ENCODE measurements at regions of chr16 and their contacts with region 1.

Region 1: GRCh38 chr16:21277927-21278706 is at the start of gene CRYM:
- DNase-seq: peak; percentile 84
- H3K4me3 Mint-ChIP-seq: peak within 1 kb of the TSS; percentile 63
- H3K27ac Mint-ChIP-seq: no peak within 1 kb of the TSS
- H3K4me1 Mint-ChIP-seq: peaks cover 2% of the 10 kb centered on the region
- H3K27me3 Mint-ChIP-seq: peaks cover 63% of the 10 kb centered on the region
- total RNA-seq, gene CRYM: not detected in 2 replicates

Region 2: GRCh38 chr16:21158208-21159110 is 119.7 kb before region 1 on chr16 and contains the start of gene LDAF1:
- intact Hi-C with region 1: loop called (anchors 10 kb)
- DNase-seq: peak; percentile 96
- H3K4me3 Mint-ChIP-seq: peak within 1 kb of the TSS; percentile 91
- H3K27ac Mint-ChIP-seq: peak within 1 kb of the TSS; percentile 61
- H3K4me1 Mint-ChIP-seq: peaks cover 14% of the 10 kb centered on the region
- H3K27me3 Mint-ChIP-seq: no peaks in the 10 kb centered on the region
- total RNA-seq, gene LDAF1: 7.2 and 7.3 TPM in 2 replicates

Region 3: GRCh38 chr16:21184834-21185233 is 93.3 kb before region 1 on chr16:
- intact Hi-C with region 1: loop called (anchors 1 kb)
- DNase-seq: no peak
- H3K4me3 Mint-ChIP-seq: no peak overlapping the region
- H3K27ac Mint-ChIP-seq: no peak overlapping the region
- H3K4me1 Mint-ChIP-seq: peaks cover 15% of the 10 kb centered on the region
- H3K27me3 Mint-ChIP-seq: no peaks in the 10 kb centered on the region